ENCODE measurements at regions of chr17 and their contacts with region 1.

Region 1: DNA sequence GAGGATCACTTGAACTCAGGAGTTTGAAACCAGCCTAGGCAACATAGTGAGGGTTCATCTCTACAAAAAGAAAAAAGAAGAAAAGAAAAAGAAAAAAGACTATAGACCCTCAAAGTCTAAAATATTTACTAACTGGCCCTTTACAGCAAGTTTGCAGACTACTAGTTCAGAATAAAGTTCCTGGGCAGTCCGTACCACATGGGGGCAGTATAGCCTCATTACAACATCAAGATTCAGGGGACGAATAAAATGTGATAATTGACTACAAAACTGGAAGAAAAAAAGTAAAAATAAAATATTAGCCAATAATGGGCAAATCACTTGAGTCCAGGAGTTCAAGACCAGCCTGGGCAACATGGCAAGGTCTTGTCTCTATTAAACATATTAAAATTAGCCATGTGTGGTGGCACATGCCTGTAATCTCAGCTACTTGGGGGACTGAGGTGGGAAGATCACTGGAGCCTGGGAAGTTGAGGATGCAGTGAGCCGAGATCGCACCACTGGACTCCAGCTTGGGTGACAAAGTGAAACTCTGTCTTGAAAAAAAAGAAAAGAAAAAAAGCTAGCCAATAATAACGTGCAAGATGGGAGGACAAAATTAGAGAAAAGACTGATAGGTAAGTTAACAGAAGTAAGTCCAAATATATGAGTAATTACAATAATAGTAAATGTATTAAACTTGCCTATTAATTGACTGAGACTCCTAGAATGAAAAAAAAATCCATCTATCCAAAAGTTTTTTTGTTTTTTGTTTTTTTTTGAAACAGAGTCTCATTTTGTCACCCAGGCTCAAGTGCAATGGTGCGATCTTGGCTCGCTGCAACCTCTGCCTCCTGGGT is 129.4 kb upstream of the SEC14L1 start:
- DNase-seq: peak; percentile 75
- ATAC-seq: no peak
- H3K4me3 Mint-ChIP-seq: no peak overlapping the region
- H3K27ac Mint-ChIP-seq: no peak overlapping the region
- H3K4me1 Mint-ChIP-seq: no peaks in the 10 kb centered on the region
- H3K27me3 Mint-ChIP-seq: peaks cover 14% of the 10 kb centered on the region

Region 2: DNA sequence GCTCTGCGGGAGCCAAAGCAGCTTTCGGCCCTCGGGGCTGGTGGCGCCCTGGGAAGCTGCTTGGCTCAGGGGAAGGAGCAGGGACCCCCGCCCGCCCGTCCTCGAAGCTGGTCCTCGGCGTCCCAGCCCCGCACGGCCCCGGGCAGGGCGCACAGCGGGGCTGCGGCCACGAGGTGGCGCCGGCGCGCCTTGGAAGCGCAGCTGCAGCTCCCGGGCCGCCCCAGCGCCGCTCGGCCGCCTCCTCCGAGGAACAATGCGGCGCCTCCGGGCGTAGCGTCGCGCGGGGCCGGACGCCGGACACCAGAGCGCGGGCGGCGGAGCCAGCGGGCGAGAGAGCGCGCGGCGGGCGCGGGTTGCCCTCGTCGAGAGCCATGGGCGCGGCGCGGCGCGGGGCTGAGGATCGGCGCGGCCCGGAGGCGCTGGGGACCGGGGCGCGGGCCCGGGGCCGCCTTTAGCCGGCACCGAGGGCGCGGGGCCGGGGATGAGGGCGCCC is 143.2 kb before region 1 on chr17 and contains the start of gene MGAT5B:
- CTCF ChIA-PET with region 1: interaction called, 11 read pairs
- POLR2A ChIA-PET with region 1: no interaction called
- DNase-seq: peak; percentile 77
- ATAC-seq: peak; percentile 97
- H3K4me3 Mint-ChIP-seq: peak within 1 kb of the TSS; percentile 40
- H3K27ac Mint-ChIP-seq: no peak within 1 kb of the TSS
- H3K4me1 Mint-ChIP-seq: peaks cover 15% of the 10 kb centered on the region
- H3K27me3 Mint-ChIP-seq: peaks cover 28% of the 10 kb centered on the region
- total RNA-seq, gene MGAT5B: 0.26 TPM in 1 of 2 experiments, not detected in the other

Region 3: DNA sequence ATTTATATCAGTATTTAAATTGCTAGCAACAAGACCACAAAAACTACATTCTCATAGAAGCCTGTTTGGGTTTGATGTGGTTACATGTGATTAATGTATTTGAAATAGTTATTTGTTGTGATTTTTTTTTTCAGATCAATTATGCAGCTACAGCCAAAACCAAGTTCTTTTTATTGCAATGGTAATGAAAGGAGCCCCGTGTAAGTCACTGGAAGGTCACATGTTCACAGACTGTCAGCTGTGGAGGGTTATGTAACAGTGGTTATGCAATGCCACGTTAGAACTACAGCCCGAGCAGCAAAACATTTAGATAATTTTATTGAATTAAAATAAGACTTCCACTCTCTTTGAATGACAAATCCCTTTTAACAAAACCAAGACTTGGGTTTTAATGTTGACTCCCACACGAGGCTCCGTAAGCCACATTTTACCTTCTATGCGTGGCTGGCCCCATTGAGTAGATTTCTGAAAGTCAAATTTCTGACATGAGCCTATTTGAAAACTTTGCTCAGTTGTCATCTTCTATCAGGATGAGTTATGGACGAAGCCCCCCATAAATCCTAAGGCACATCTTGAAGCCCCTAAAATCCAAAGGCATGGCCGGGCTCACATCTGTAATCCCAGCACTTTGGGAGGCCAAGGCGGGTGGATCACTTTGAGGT is 87.6 kb after region 1 on chr17:
- CTCF ChIA-PET with region 1: no interaction called
- POLR2A ChIA-PET with region 1: no interaction called
- DNase-seq: peak; percentile 36
- ATAC-seq: no peak
- H3K4me3 Mint-ChIP-seq: no peak overlapping the region
- H3K27ac Mint-ChIP-seq: no peak overlapping the region
- H3K4me1 Mint-ChIP-seq: peaks cover 40% of the 10 kb centered on the region
- H3K27me3 Mint-ChIP-seq: no peaks in the 10 kb centered on the region